ENCODE measurements at regions of chr11 and their contacts with region 1.

Region 1: GRCh38 chr11:8682303-8683114 is at the starts of genes RPL27A and TRIM66:
- DNase-seq: peak; percentile 99
- H3K4me3 Mint-ChIP-seq: peak within 1 kb of the TSS; percentile 97
- H3K27ac Mint-ChIP-seq: peak within 1 kb of the TSS; percentile 95
- H3K4me1 Mint-ChIP-seq: peaks cover 42% of the 10 kb centered on the region
- H3K27me3 Mint-ChIP-seq: no peaks in the 10 kb centered on the region
- total RNA-seq, gene RPL27A: 679 and 691 TPM in 2 replicates
- total RNA-seq, gene TRIM66: 11.7 and 14.2 TPM in 2 replicates

Region 2: GRCh38 chr11:8610532-8611116 is 71.9 kb before region 1 on chr11:
- intact Hi-C with region 1: loop called (anchors 2 kb)
- DNase-seq: peak; percentile 56
- H3K4me3 Mint-ChIP-seq: no peak overlapping the region
- H3K27ac Mint-ChIP-seq: peak overlapping the region; percentile 38
- H3K4me1 Mint-ChIP-seq: peaks cover 13% of the 10 kb centered on the region
- H3K27me3 Mint-ChIP-seq: peaks cover 2% of the 10 kb centered on the region

Region 3: DNA sequence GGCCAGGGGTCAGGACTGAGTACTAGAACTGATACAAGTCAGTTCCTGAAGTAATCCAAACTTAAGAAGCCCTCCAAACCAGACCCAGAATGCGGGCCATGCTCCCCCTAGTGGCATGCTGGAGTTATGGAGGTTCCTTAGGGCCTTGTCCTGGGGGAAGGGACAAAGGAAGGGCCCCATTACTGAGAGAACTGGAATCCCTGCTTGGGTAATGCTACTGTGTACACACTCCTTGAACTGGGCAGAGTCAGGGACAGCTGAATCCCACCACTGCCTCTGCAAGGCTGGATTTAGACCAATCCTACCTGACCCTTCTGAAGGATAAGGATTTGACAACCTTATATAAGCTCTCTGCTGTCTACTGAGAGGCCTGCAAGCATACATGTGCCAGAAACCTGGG is 131.1 kb after region 1 on chr11:
- intact Hi-C with region 1: loop called (anchors 1 kb)
- DNase-seq: peak; percentile 6
- H3K4me3 Mint-ChIP-seq: no peak overlapping the region
- H3K27ac Mint-ChIP-seq: no peak overlapping the region
- H3K4me1 Mint-ChIP-seq: peaks cover 10% of the 10 kb centered on the region
- H3K27me3 Mint-ChIP-seq: peaks cover 15% of the 10 kb centered on the region

Region 4: DNA sequence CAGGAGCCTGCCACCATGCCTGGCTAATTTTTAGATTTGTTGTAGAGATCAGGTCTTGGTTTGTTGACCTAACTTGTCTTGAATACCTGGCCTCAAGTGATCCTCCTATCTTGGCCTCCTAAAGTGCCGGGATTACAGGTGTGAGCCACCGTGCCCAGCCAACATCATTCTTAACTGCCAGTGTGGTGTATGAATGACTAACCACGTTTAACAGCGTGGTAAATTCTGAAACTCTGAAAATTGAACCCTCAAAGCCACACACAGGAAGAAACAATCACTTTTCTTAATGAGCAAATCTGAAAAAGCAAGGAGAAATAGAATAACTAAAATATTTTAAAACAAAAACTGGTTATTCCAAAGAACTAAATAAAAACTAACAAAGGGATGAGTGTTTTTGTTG is 274.4 kb after region 1 on chr11:
- intact Hi-C with region 1: no loop called
- DNase-seq: no peak
- H3K4me3 Mint-ChIP-seq: no peak overlapping the region
- H3K27ac Mint-ChIP-seq: no peak overlapping the region
- H3K4me1 Mint-ChIP-seq: peaks cover 29% of the 10 kb centered on the region
- H3K27me3 Mint-ChIP-seq: no peaks in the 10 kb centered on the region